ENCODE measurements at regions of chr1 and their contacts with region 1.

Region 1: GRCh38 chr1:64242895-64243756 is 39.7 kb downstream of the UBE2U start:
- DNase-seq: peak in 4 of 5 donors; percentile 12 to 34 (median 21)
- H3K4me3 ChIP-seq: no peak overlapping the region
- H3K4me3 Mint-ChIP-seq: peak overlapping the region; percentile 1 to 87 (median 63)
- H3K27ac ChIP-seq: no peak overlapping the region
- H3K27ac Mint-ChIP-seq: peak overlapping the region in 2 of 7 donors; percentile 19 to 31
- H3K4me1 ChIP-seq: peaks cover 22% of the 10 kb centered on the region
- H3K4me1 Mint-ChIP-seq: peaks cover 12 to 31% (median 15%) of the 10 kb centered on the region in 4 donors
- H3K27me3 ChIP-seq: no peaks in the 10 kb centered on the region
- H3K27me3 Mint-ChIP-seq: peaks cover 6 to 13% of the 10 kb centered on the region in 2 donors

Region 2: GRCh38 chr1:62841587-62842169 is 1401.4 kb before region 1 on chr1:
- CTCF ChIA-PET with region 1: no interaction called
- POLR2A ChIA-PET with region 1: no interaction called
- intact Hi-C with region 1: loop called (anchors 5 kb)
- DNase-seq: peak in 4 of 5 donors; percentile 32 to 48 (median 44)
- H3K4me3 ChIP-seq: no peak overlapping the region
- H3K4me3 Mint-ChIP-seq: no peak overlapping the region
- H3K27ac ChIP-seq: no peak overlapping the region
- H3K27ac Mint-ChIP-seq: no peak overlapping the region
- H3K4me1 ChIP-seq: no peaks in the 10 kb centered on the region
- H3K4me1 Mint-ChIP-seq: peaks cover 0 to 1% (median 0%) of the 10 kb centered on the region in 4 donors
- H3K27me3 ChIP-seq: no peaks in the 10 kb centered on the region
- H3K27me3 Mint-ChIP-seq: no peaks in the 10 kb centered on the region

Region 3: DNA sequence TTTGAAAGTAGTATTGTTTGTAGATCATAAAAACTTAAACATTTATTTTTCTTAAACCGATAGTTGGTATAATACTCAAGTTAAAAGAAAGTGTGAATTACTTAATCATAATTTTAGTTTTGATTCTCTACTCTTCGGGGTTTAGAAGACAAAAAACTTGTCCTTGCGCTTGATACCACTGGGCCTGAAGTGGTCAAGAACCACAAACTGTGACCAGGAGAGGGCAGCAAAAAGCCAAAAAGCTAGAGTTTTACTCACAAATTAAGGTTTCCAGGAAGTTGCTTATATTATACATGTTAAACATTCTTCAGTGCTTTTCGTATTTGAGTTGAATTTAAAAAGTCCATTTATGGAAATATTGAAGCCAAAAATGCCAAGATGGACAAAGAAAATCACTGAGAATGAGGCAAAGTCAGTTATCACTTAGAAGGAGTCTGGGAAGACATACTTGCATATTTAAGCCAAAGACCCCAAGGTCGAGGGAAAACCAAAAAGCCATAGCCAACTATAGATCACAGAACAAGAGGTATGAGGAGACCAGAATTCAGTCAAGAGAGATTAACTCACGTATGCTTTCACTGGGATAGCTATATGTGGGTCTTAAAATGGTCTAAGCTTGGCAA is 685.6 kb before region 1 on chr1:
- CTCF ChIA-PET with region 1: interaction called, 9 read pairs
- POLR2A ChIA-PET with region 1: no interaction called
- intact Hi-C with region 1: loop called (anchors 5 kb)
- DNase-seq: no peak
- H3K4me3 ChIP-seq: no peak overlapping the region
- H3K4me3 Mint-ChIP-seq: no peak overlapping the region
- H3K27ac ChIP-seq: no peak overlapping the region
- H3K27ac Mint-ChIP-seq: no peak overlapping the region
- H3K4me1 ChIP-seq: no peaks in the 10 kb centered on the region
- H3K4me1 Mint-ChIP-seq: peaks cover 0 to 2% (median 0%) of the 10 kb centered on the region in 4 donors
- H3K27me3 ChIP-seq: no peaks in the 10 kb centered on the region
- H3K27me3 Mint-ChIP-seq: no peaks in the 10 kb centered on the region

Region 4: GRCh38 chr1:63575340-63575826 is 667.7 kb before region 1 on chr1:
- CTCF ChIA-PET with region 1: interaction called, 8 read pairs
- POLR2A ChIA-PET with region 1: no interaction called
- intact Hi-C with region 1: loop called (anchors 1 kb)
- DNase-seq: peak in 4 of 5 donors; percentile 11 to 40 (median 30)
- H3K4me3 ChIP-seq: no peak overlapping the region
- H3K4me3 Mint-ChIP-seq: no peak overlapping the region
- H3K27ac ChIP-seq: no peak overlapping the region
- H3K27ac Mint-ChIP-seq: no peak overlapping the region
- H3K4me1 ChIP-seq: no peaks in the 10 kb centered on the region
- H3K4me1 Mint-ChIP-seq: no peaks in the 10 kb centered on the region
- H3K27me3 ChIP-seq: no peaks in the 10 kb centered on the region
- H3K27me3 Mint-ChIP-seq: no peaks in the 10 kb centered on the region

Region 5: DNA sequence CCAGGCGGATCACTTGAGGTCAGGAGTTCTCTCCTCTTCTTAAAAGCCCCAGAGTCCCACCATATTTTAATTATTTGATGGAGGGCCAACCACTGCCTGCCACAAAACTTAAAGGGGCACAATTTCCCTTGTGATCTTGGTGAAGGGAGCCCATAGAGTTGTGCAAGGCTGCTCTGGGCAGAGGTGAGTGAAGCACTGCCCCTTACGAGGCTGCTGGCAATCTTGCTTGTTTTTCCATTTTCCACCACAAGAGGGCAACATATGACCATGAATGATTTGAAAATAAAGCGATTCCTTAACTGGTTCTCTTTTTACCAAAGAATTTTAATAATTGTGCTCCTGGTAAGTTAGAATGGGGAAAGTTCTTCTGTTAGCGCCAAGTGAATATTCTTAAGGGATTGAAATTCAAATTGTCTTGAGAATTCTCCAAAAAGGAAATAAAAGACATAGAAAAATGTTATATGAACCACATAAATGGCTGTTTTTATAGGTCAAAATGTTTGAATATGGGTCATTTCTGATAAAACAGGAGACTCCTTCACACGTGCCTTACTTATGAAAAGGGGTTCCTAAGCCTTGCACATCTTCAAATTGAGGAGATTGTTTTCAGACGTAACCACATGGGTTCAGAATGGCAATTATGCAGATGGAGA is 627.2 kb before region 1 on chr1:
- CTCF ChIA-PET with region 1: interaction called, 51 read pairs
- POLR2A ChIA-PET with region 1: no interaction called
- intact Hi-C with region 1: loop called (anchors 1 kb)
- DNase-seq: peak; percentile 49 to 76 (median 67)
- H3K4me3 ChIP-seq: no peak overlapping the region
- H3K4me3 Mint-ChIP-seq: no peak overlapping the region
- H3K27ac ChIP-seq: no peak overlapping the region
- H3K27ac Mint-ChIP-seq: peak overlapping the region in 1 of 7 donors; percentile 58
- H3K4me1 ChIP-seq: no peaks in the 10 kb centered on the region
- H3K4me1 Mint-ChIP-seq: peaks cover 0 to 10% (median 2%) of the 10 kb centered on the region in 4 donors
- H3K27me3 ChIP-seq: no peaks in the 10 kb centered on the region
- H3K27me3 Mint-ChIP-seq: no peaks in the 10 kb centered on the region

Region 6: DNA sequence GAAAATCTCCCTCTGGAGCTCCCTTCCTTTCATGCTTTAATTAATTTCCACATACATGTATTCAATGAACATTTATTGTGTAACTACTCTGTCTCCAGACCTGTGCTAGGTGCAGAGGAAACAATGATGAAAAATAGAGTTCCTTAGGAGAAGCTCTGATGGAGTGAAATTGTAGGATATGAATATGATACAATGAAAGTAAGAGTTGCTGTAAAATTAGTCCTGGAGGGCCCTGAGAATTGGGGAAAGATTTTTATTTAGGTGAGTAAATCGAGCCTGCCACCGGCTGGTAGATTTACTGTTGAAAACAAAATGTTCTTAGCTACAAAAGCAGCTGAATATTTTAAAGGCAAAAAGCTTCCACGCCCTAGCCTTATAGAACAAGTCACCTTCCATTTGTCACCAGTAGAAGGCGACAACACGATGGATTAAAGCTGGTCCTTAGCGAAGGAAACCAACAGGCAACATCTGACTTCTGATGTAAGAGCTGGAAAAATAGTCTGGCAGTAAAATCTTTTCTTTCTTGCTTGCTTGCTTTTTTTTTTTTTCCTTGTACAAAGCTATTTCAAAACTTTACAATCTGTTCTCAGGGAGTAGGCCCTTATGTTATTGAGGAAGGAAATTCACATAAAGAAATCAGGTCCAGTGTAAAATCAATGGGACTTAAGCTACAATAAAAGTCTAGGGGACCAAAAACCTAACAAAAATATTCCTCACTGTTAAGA is 551.3 kb before region 1 on chr1:
- CTCF ChIA-PET with region 1: interaction called, 30 read pairs
- POLR2A ChIA-PET with region 1: no interaction called
- intact Hi-C with region 1: loop called (anchors 1 kb)
- DNase-seq: peak in 4 of 5 donors; percentile 10 to 17 (median 12)
- H3K4me3 ChIP-seq: no peak overlapping the region
- H3K4me3 Mint-ChIP-seq: no peak overlapping the region
- H3K27ac ChIP-seq: no peak overlapping the region
- H3K27ac Mint-ChIP-seq: no peak overlapping the region
- H3K4me1 ChIP-seq: no peaks in the 10 kb centered on the region
- H3K4me1 Mint-ChIP-seq: peaks cover 0 to 2% (median under 1%) of the 10 kb centered on the region in 4 donors
- H3K27me3 ChIP-seq: no peaks in the 10 kb centered on the region
- H3K27me3 Mint-ChIP-seq: no peaks in the 10 kb centered on the region

Region 7: DNA sequence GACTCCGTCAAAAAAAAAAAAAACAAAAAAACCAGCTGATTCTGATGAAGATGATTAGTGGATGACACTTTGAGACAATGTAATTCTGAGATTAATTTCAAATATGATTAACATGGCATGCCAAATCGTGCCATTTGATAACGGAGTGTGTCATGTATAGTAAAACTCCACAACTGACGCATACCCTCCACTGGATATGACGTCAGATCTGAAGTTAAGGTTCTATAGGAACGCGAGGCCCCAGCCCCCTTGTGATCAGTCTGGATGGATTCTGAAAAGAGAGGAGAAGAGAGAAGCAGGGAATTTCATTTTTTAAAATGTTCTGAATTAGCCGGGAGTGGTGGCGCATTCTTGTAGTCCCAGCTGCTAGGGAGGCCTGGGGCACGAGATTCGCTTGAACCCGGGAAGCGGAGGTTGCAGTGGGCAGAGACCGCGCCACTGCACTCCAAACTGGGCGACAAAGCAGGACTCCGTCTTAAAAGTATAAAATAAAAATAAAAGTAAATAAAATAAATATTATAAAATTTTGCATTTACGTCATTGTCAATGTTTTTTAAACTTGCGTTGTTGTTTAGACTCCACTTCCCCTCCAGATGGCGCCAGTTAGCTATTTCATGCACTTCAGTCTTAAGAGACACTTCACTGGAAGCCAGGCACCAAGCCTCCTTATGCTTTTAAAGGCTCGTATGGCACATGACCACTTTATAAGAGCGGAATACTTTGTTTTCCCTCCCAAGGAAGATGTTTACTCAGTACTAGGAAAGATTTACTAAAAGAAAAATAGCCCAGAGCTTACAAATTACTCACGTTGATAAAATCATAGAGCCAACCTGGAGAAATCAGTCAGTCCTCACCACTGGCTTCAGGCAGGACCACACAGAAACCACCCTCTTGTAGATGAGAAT is 25.8 kb after region 1 on chr1:
- CTCF ChIA-PET with region 1: no interaction called
- POLR2A ChIA-PET with region 1: no interaction called
- intact Hi-C with region 1: no loop called
- DNase-seq: peak; percentile 47 to 62 (median 54)
- H3K4me3 ChIP-seq: no peak overlapping the region
- H3K4me3 Mint-ChIP-seq: no peak overlapping the region
- H3K27ac ChIP-seq: no peak overlapping the region
- H3K27ac Mint-ChIP-seq: peak overlapping the region in 1 of 7 donors; percentile 26
- H3K4me1 ChIP-seq: no peaks in the 10 kb centered on the region
- H3K4me1 Mint-ChIP-seq: no peaks in the 10 kb centered on the region
- H3K27me3 ChIP-seq: peaks cover 4% of the 10 kb centered on the region
- H3K27me3 Mint-ChIP-seq: peaks cover 9 to 22% of the 10 kb centered on the region in 2 donors